Caco-2 (cell line): ENCODE measurements at regions of chr13 and their contacts with region 1.

Region 1: DNA sequence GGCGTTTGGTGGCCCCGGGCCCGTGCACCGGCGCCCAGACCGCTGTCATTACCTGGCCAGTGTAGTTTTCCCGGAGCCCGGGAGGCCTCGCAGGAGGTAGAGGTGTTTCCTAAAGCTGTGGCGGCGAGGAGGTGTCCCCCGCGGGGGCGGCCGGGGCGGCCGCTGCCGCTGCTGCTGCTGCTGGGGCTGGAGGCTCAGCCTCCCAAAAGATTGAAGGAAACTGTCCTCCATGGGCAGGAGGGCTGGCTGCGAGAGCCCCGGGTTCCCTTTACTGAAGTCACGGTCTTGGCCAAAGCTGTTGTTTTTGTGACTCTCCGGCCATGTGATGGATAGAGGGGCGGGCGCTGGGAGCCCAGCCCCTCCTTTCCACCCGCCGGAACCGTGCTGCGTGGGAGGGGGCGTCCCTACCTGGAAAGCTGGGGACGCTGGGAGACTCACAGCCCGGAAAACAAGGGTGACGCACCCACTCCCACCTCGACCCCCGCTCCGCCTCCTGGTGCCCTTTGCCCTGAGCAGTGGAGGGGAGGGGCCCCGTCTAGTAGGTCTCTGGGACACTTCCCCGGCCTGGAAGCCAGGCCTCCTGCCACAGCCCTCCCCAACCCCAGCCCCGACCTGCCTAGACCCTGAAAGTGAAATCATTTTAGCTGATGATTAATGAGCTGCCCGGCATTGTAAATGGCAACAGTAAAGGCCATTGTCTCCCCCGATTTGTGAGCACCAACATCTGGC is at the start of gene N4BP2L1:
- DNase-seq: peak; percentile 95 to 96
- H3K4me3 ChIP-seq: peak within 1 kb of the TSS; percentile 62
- H3K4me3 Mint-ChIP-seq: peak within 1 kb of the TSS; percentile 76
- H3K27ac Mint-ChIP-seq: peak within 1 kb of the TSS; percentile 69
- H3K4me1 ChIP-seq: peaks cover 22% of the 10 kb centered on the region
- H3K4me1 Mint-ChIP-seq: peaks cover 25% of the 10 kb centered on the region
- H3K27me3 ChIP-seq: no peaks in the 10 kb centered on the region
- H3K27me3 Mint-ChIP-seq: no peaks in the 10 kb centered on the region
- CTCF ChIP-seq: no peak
- total RNA-seq, gene N4BP2L1: 7.9 and 9.3 TPM in 2 replicates

Region 2: GRCh38 chr13:32019612-32020233 is 408.3 kb before region 1 on chr13:
- CTCF ChIA-PET with region 1: no interaction called
- POLR2A ChIA-PET with region 1: interaction called, 6 read pairs
- intact Hi-C with region 1: loop called (anchors 10 kb)
- DNase-seq: peak; percentile 68 to 75
- H3K4me3 ChIP-seq: no peak overlapping the region
- H3K4me3 Mint-ChIP-seq: no peak overlapping the region
- H3K27ac Mint-ChIP-seq: no peak overlapping the region
- H3K4me1 ChIP-seq: no peaks in the 10 kb centered on the region
- H3K4me1 Mint-ChIP-seq: peaks cover 9% of the 10 kb centered on the region
- H3K27me3 ChIP-seq: no peaks in the 10 kb centered on the region
- H3K27me3 Mint-ChIP-seq: no peaks in the 10 kb centered on the region
- CTCF ChIP-seq: peak; percentile 87 to 95

Region 3: DNA sequence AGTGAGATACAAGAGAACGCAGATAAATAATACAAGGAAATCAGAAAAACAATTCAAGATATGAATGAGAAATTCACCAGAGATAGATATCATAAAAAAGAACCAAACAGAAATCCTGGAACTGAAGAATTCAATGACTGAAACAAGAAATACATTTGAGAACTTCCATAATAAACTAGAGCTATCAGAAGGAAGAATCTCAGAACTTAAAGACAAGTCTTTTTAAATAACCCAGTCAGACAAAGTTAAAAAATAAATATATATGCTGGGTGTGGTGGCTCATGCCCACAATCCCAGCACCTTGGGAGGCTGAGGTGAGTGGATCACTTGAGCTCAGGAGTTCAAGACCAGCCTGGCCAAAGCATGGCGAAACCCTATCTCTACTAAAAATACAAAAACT is 28.6 kb after region 1 on chr13:
- CTCF ChIA-PET with region 1: no interaction called
- POLR2A ChIA-PET with region 1: no interaction called
- intact Hi-C with region 1: no loop called
- DNase-seq: no peak
- H3K4me3 ChIP-seq: no peak overlapping the region
- H3K4me3 Mint-ChIP-seq: no peak overlapping the region
- H3K27ac Mint-ChIP-seq: no peak overlapping the region
- H3K4me1 ChIP-seq: no peaks in the 10 kb centered on the region
- H3K4me1 Mint-ChIP-seq: no peaks in the 10 kb centered on the region
- H3K27me3 ChIP-seq: no peaks in the 10 kb centered on the region
- H3K27me3 Mint-ChIP-seq: no peaks in the 10 kb centered on the region
- CTCF ChIP-seq: no peak

Region 4: DNA sequence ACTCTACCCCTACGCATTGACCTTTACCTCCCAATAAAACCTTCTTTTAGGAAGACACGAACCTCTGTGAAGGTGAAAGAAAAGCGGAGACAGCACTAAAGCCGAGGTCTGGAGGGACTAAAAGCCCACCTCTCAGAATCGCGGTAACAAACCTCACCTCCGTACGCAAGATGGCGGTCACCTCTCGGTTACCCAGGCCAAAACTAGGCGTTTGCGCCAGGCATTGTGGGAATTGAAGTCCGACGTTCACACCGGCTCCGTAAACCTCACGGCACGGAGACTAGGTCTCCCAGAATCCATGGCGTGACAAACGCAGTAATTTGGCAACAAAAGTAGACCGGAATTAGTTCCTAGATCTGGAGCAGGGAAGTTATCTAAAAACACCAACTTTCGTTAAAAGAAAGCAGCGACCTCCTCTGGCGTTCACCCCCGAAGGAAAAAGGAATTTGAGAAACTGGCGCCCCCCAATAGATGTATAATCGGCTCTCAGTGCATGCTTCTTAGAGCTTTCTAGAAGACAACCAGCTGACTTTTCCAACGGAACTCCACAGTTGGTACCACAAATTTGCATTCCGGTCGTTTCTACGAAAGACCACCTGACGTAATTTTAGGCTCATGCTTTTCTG is 110.7 kb after region 1 on chr13 and contains the start of gene N4BP2L2:
- CTCF ChIA-PET with region 1: no interaction called
- POLR2A ChIA-PET with region 1: no interaction called
- intact Hi-C with region 1: loop called (anchors 2 kb)
- DNase-seq: peak; percentile 95 to 96
- H3K4me3 ChIP-seq: peak within 1 kb of the TSS; percentile 57
- H3K4me3 Mint-ChIP-seq: peak within 1 kb of the TSS; percentile 89
- H3K27ac Mint-ChIP-seq: peak within 1 kb of the TSS; percentile 96
- H3K4me1 ChIP-seq: peaks cover 4% of the 10 kb centered on the region
- H3K4me1 Mint-ChIP-seq: peaks cover 20% of the 10 kb centered on the region
- H3K27me3 ChIP-seq: no peaks in the 10 kb centered on the region
- H3K27me3 Mint-ChIP-seq: no peaks in the 10 kb centered on the region
- CTCF ChIP-seq: peak in 1 of 2 experiments; percentile 56
- total RNA-seq, gene N4BP2L2: 128 and 131 TPM in 2 replicates